Activated T-helper 1 cell treated with anti-CD3 and anti-CD28 coated beads, Interleukin-12 subunit alpha, Interleukin-12 subunit beta, Interleukin-2, Interleukin-4 antibody, amounts not matched to agents 30 ng/mL and 10 ng/mL and 1 ng/mL, durations not matched to agents 14 hours and 24 hours and 36 hours (primary cell): ENCODE measurements at regions of chr15 and their contacts with region 1.

Region 1: GRCh38 chr15:99371180-99372103 is 120.2 kb downstream of the LRRC28 start:
- DNase-seq: no peak
- H3K4me3 Mint-ChIP-seq: peak overlapping the region; percentile 20
- H3K27ac Mint-ChIP-seq: peak overlapping the region; percentile 69
- H3K4me1 Mint-ChIP-seq: peaks cover 29% of the 10 kb centered on the region
- H3K27me3 Mint-ChIP-seq: no peaks in the 10 kb centered on the region

Region 2: DNA sequence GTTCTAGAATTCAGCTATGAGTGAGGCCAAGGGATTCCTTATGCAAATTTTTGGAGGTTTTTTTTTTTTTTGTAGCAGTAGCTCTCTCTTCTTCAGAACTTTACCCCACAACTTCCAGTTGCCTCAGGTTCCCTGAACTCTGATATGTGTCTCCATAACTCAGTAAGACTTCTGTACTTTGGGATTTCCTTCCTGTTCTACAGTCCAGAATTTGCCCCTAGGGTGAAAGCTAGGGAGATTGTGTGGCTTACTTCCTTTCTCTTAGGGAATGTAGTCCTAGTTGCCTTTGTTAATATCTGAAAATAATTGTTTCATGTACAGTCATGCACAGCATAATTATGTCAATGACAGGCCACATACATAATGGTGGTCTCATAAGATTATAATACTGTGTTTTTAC is 89.3 kb before region 1 on chr15:
- intact Hi-C with region 1: loop called (anchors 1 kb)
- DNase-seq: no peak
- H3K4me3 Mint-ChIP-seq: no peak overlapping the region
- H3K27ac Mint-ChIP-seq: peak overlapping the region; percentile 63
- H3K4me1 Mint-ChIP-seq: peaks cover 68% of the 10 kb centered on the region
- H3K27me3 Mint-ChIP-seq: no peaks in the 10 kb centered on the region

Region 3: GRCh38 chr15:99324082-99324620 is 47.3 kb before region 1 on chr15:
- intact Hi-C with region 1: loop called (anchors 2 kb)
- DNase-seq: no peak
- H3K4me3 Mint-ChIP-seq: no peak overlapping the region
- H3K27ac Mint-ChIP-seq: peak overlapping the region; percentile 51
- H3K4me1 Mint-ChIP-seq: peaks cover 20% of the 10 kb centered on the region
- H3K27me3 Mint-ChIP-seq: peaks cover 4% of the 10 kb centered on the region

Region 4: DNA sequence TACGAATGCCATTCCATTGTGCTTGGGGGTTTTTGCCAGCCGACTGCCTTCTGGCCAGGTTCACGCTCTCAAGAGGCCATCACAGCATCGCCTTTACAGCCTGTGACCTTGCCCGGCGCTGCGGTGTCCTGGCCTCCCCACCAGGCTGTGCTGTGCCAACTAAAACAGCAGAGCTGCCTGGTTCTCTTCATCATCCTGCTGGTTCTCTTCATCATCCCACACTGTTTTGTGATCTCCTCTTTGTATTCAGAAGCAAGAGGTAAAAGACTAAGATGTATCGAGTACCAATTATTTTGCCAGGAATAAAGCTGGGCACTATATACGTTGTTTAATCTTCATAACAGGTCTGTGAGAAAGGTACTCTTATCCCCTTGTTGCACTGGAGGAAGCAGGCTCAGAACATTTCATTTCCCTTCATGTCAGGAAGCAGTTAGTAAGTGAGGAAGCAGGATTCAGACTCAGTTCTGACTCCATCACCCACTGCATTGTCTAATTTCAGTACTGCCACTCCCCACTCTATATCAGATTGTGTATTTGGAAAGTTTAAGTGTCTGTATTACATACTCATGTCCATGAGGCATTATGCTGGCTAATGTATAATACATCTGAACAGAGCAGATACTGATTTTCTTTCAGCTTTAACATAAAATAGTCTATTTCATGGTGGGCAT is 27.4 kb before region 1 on chr15:
- intact Hi-C with region 1: loop called (anchors 1 kb)
- DNase-seq: peak; percentile 4
- H3K4me3 Mint-ChIP-seq: no peak overlapping the region
- H3K27ac Mint-ChIP-seq: no peak overlapping the region
- H3K4me1 Mint-ChIP-seq: peaks cover 12% of the 10 kb centered on the region
- H3K27me3 Mint-ChIP-seq: no peaks in the 10 kb centered on the region

Region 5: GRCh38 chr15:99424978-99425656 is 53.7 kb after region 1 on chr15:
- intact Hi-C with region 1: loop called (anchors 1 kb)
- DNase-seq: peak; percentile 49
- H3K4me3 Mint-ChIP-seq: peak overlapping the region; percentile 68
- H3K27ac Mint-ChIP-seq: peak overlapping the region; percentile 92
- H3K4me1 Mint-ChIP-seq: peaks cover 63% of the 10 kb centered on the region
- H3K27me3 Mint-ChIP-seq: no peaks in the 10 kb centered on the region

Region 6: GRCh38 chr15:99442252-99442897 is 70.9 kb after region 1 on chr15:
- intact Hi-C with region 1: loop called (anchors 5 kb)
- DNase-seq: no peak
- H3K4me3 Mint-ChIP-seq: no peak overlapping the region
- H3K27ac Mint-ChIP-seq: peak overlapping the region; percentile 74
- H3K4me1 Mint-ChIP-seq: peaks cover 42% of the 10 kb centered on the region
- H3K27me3 Mint-ChIP-seq: peaks cover 15% of the 10 kb centered on the region

Region 7: DNA sequence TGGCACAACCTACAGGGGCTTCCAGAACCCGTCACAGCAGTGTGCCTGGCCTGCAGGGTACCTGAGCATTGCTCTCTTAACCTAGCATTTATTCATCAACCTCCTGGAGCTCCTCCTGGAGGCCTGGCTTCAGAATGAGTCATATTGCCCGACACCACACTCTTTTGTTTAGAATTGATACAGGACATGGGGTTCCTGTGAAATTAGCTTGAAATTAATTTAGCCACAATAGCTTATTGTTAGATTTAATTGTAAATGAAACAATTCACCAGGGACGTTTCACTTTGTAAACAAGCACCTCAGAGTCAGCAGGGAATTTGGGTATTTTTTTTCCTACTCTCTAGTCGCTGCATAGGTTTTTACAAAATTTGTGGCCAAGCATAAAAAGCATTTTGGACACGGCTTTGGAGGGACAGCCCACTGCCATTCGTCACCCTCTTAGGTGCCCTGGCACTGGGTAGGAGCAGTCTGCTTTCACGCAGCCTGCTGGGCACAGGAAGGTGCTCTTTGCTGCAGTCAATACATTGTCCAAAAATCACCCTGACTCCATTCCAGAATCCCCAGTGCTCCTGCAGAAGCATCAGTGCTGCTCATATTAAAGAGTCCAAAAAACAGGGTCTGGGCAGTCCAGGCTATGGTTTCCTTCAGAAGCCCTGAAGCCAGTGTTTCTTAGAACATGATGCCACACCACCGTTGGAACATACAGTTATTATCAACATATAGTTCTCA is 133.5 kb after region 1 on chr15:
- intact Hi-C with region 1: loop called (anchors 2 kb)
- DNase-seq: no peak
- H3K4me3 Mint-ChIP-seq: no peak overlapping the region
- H3K27ac Mint-ChIP-seq: peak overlapping the region; percentile 73
- H3K4me1 Mint-ChIP-seq: peaks cover 60% of the 10 kb centered on the region
- H3K27me3 Mint-ChIP-seq: no peaks in the 10 kb centered on the region